Endothelial cell of umbilical vein (primary cell): ENCODE measurements at regions of chr10 and their contacts with region 1.

Region 1: DNA sequence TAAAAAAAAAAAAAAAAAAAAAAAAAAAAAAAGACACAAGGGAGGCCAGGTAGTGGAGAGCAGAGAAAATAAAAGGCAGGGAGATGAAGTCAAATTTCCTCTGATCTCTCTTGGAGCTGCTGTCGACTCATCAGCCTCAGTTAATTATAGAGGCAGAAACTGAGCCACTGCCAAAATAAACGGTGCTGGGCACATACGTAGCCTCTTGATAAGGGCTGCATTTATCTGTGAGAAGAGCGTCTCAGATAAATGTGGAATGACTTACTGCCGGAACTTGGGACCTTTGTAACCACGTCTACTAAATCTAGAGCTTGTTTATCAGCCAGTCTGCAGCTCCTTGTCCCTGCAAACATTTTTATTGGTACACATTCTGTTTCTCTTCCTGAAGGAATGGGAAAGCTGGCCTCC is 162.3 kb downstream of the BAMBI start:
- DNase-seq: peak; percentile 60
- H3K4me3 ChIP-seq: peak overlapping the region in 1 of 3 experiments; percentile 24
- H3K27ac ChIP-seq: no peak overlapping the region
- H3K4me1 ChIP-seq: peaks cover 9% of the 10 kb centered on the region
- H3K27me3 ChIP-seq: peaks cover 0 to 3% of the 10 kb centered on the region in 2 experiments
- CTCF ChIP-seq: no peak
- POLR2A ChIP-seq: no peak

Region 2: GRCh38 chr10:28719789-28720436 is 119.7 kb before region 1 on chr10:
- CTCF ChIA-PET with region 1: no interaction called
- POLR2A ChIA-PET with region 1: no interaction called
- dilution Hi-C with region 1: no loop called
- intact Hi-C with region 1: loop called (anchors 1 kb)
- DNase-seq: peak; percentile 77
- H3K4me3 ChIP-seq: peak overlapping the region in 1 of 3 experiments; percentile 50
- H3K27ac ChIP-seq: peak overlapping the region; percentile 32
- H3K4me1 ChIP-seq: peaks cover 16% of the 10 kb centered on the region
- H3K27me3 ChIP-seq: no peaks in the 10 kb centered on the region
- CTCF ChIP-seq: no peak
- POLR2A ChIP-seq: no peak